ENCODE measurements at regions of chr21 and their contacts with region 1.

Region 1: GRCh38 chr21:24895885-24896734 is 711.2 kb downstream of the MRPL39 start:
- DNase-seq: peak; percentile 50 to 57
- H3K4me3 ChIP-seq: no peak overlapping the region
- H3K4me1 ChIP-seq: peaks cover 9% of the 10 kb centered on the region; the same call in 1 of the 2 replicates
- H3K27me3 ChIP-seq: no peaks in the 10 kb centered on the region

Region 2: DNA sequence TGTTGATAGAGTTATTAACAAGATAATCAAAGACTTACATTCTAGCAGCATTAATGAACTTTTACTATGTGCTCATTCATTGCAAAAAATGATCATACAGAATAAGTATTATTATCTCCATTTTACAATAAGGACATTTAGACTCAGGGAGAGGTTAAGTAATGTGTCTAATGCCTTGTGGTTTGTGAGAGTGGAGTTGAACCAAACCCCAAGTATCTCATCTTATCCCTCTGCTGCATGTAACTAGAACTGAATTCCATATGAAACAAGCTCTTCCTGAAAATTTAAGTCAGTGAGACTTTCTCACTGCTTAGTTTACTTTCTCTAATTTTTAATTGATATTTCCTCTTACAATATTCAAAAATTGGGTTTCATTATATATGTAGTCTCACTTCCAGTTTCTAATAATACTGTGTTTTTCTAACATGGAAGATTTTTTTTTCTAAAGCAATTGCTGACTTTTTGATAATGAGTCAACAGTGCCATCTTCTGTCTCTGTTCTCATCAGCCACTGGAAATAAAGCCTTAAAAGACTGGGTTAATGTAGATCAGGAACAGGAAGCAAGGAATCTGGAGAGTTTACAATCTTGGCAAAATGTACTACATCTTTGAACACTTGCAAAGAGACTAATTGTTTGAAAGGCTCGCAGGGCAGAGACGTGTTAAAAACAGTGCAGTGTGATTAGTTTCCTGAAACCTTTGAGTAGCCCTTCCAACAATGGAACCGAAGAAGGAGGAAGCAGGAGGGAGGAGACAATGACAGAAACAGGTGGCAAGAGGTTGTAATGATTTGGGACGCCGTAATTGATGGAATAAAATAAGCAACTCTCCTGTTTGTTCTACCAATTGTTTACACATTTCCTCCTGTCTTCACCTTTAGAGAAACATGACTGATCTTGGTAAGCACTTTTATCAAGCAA is 143.6 kb after region 1 on chr21:
- in situ Hi-C with region 1: loop called (anchors 10 kb)
- DNase-seq: peak in 1 of 2 experiments; percentile 38
- H3K4me3 ChIP-seq: peak overlapping the region; percentile 14; the same call in 1 of the 2 replicates
- H3K4me1 ChIP-seq: peaks cover 7% of the 10 kb centered on the region; the same call in 1 of the 2 replicates
- H3K27me3 ChIP-seq: no peaks in the 10 kb centered on the region

Region 3: GRCh38 chr21:25385911-25386474 is 489.9 kb after region 1 on chr21:
- in situ Hi-C with region 1: loop called (anchors 10 kb)
- DNase-seq: peak; percentile 47 to 86
- H3K4me3 ChIP-seq: no peak overlapping the region
- H3K4me1 ChIP-seq: peaks cover 20% of the 10 kb centered on the region
- H3K27me3 ChIP-seq: no peaks in the 10 kb centered on the region

Measured in HAP-1 (cell line).